ENCODE measurements at regions of chr10 and their contacts with region 1.

Region 1: GRCh38 chr10:110746254-110746826 is 102.2 kb downstream of the RBM20 start:
- DNase-seq: no peak
- H3K4me3 ChIP-seq: no peak overlapping the region
- CTCF ChIP-seq: peak; percentile 65

Region 2: DNA sequence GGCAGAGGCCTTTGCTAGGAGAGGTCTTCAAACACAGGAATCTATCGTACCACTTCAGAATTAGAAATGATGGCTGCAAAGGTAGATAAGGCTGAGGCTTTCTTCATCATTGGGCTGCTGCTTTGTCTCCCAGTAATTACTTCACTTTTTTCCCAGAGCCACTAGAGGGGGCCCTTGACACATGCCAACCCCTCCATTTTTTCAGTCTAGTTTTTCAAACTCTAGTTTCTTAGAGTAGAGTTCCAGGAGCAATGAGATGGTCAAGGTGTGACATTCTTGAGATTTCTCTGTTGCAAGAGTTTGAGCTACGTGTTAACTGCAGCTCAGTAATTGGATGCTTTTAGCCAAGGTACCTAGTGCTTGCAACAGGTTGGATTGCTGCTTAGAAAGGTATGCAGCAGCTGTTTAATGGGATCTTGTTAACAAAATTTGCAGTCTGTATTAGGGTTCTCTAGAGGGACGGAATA is 136.0 kb before region 1 on chr10:
- CTCF ChIA-PET with region 1: interaction called, 10 read pairs
- POLR2A ChIA-PET with region 1: no interaction called
- DNase-seq: no peak
- H3K4me3 ChIP-seq: no peak overlapping the region
- CTCF ChIP-seq: peak; percentile 72

Region 3: DNA sequence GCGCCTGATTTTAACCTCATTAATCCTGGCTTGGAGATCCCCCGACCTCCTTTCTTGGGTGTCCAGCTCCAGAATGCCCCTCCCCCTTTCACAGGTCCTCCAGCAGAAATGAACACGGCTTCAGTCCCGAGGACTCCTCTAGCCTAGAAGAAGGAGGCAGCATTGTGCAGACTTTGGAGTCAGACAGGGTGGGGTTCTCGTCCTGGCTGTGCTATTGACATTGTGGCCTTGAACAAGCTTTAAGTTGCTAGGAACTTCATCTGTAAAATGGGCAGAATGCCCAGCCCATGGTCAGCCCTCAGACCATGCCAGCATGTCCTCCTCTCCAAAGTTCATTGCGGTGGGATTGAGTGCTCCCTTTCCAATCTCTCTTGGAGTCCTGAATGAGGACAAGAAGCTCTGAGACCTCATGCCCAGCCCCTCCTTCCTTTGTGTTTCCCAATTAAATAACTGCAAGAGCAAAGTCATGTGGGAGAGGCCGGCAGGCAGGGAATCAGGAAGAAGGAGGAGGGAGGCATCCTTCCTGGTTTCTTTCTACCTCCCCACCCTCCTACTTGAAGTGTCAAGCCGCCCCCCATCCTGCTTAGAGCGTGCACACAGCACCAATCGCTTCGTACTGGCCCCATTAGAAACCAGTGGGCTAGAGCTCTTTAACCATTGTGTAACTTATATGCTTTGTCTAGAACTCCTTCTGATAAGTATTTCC is 15.8 kb before region 1 on chr10:
- CTCF ChIA-PET with region 1: interaction called, 12 read pairs
- POLR2A ChIA-PET with region 1: no interaction called
- DNase-seq: no peak
- H3K4me3 ChIP-seq: no peak overlapping the region
- CTCF ChIP-seq: no peak

Region 4: GRCh38 chr10:110758898-110759297 is 12.6 kb after region 1 on chr10:
- CTCF ChIA-PET with region 1: interaction called, 12 read pairs
- POLR2A ChIA-PET with region 1: no interaction called
- DNase-seq: peak; percentile 9
- H3K4me3 ChIP-seq: no peak overlapping the region
- CTCF ChIP-seq: no peak

Region 5: GRCh38 chr10:110893559-110894179 is 147.3 kb after region 1 on chr10:
- CTCF ChIA-PET with region 1: interaction called, 56 read pairs
- POLR2A ChIA-PET with region 1: no interaction called
- DNase-seq: no peak
- H3K4me3 ChIP-seq: no peak overlapping the region
- CTCF ChIP-seq: peak; percentile 23

Region 6: DNA sequence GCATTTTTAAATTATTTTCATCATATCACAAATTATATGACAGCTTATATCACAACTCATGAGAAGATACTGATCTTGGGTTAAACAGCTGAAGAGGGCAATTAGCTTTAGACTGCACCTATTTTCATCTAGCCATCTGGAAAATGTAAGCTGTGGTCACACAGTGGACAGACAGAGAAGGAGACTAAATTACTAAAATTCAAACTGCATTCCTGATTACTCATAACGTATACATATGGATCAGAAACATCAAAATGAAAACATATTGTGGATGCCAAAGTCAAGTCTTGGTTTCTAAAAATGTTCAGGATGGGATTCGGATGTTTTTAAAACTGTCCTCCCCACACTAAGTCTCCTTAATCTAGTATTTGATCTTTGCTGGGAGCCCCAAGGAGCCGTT is 166.0 kb after region 1 on chr10:
- CTCF ChIA-PET with region 1: interaction called, 11 read pairs
- POLR2A ChIA-PET with region 1: interaction called, 3 read pairs
- DNase-seq: peak; percentile 70
- H3K4me3 ChIP-seq: no peak overlapping the region
- CTCF ChIP-seq: no peak

Region 7: DNA sequence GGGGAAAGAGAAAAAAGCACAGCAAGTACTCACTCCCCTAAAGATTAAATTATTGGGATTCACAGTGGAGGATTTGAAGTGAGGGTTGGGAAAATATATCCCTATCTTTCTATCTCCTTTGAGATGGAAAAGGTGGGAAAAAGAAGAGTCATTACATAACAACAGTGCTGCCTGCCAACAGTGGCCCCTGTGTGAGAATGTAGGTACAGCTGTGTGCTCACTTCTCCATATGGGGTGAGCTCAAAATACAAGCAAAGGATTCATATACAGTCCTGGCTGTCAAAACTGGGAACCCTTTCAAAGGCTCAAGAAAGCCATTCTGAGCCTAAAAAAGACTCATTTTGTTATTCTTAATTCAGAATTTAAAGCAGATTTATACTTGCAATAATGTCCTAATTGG is 978.7 kb after region 1 on chr10:
- CTCF ChIA-PET with region 1: no interaction called
- POLR2A ChIA-PET with region 1: no interaction called
- DNase-seq: no peak
- H3K4me3 ChIP-seq: no peak overlapping the region
- CTCF ChIP-seq: no peak

Measured in AG04449 (cell line).